ENCODE measurements at regions of chr3 and their contacts with region 1.

Region 1: GRCh38 chr3:29280404-29281093 is at the start of gene RBMS3:
- DNase-seq: peak; percentile 97
- H3K4me3 ChIP-seq: peak within 1 kb of the TSS; percentile 87
- H3K27ac ChIP-seq: peak within 1 kb of the TSS; percentile 88
- H3K4me1 ChIP-seq: peaks cover 16% of the 10 kb centered on the region
- H3K27me3 ChIP-seq: no peaks in the 10 kb centered on the region
- total RNA-seq, gene RBMS3: 40.0 and 45.7 TPM in 2 replicates

Region 2: DNA sequence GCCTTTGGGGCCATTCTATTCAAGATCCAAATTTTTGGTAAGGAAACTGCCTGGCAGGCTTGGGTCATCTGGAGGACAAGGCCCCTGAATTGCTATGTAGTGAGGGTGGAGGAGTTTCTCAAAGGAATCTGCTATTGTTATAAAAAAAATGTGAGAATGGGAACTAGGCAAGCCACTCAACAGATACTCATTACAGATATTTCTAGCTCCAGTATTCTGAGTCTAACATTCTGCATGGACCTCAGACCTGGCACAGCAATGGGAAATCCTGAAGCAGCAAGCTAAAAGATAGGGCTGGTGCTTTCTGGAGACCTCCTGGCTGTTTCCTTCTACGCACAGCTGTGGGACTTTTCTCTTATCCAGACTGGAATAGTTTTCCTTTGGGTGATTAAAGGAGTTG is 430.4 kb before region 1 on chr3:
- in situ Hi-C with region 1: no loop called
- DNase-seq: peak; percentile 58
- H3K4me3 ChIP-seq: no peak overlapping the region
- H3K27ac ChIP-seq: no peak overlapping the region
- H3K4me1 ChIP-seq: peaks cover 8% of the 10 kb centered on the region; the same call in 1 of the 2 replicates
- H3K27me3 ChIP-seq: 0 out of 2 replicates have a peak, but pooled peaks cover 8% of the 10 kb centered on the region

Region 3: DNA sequence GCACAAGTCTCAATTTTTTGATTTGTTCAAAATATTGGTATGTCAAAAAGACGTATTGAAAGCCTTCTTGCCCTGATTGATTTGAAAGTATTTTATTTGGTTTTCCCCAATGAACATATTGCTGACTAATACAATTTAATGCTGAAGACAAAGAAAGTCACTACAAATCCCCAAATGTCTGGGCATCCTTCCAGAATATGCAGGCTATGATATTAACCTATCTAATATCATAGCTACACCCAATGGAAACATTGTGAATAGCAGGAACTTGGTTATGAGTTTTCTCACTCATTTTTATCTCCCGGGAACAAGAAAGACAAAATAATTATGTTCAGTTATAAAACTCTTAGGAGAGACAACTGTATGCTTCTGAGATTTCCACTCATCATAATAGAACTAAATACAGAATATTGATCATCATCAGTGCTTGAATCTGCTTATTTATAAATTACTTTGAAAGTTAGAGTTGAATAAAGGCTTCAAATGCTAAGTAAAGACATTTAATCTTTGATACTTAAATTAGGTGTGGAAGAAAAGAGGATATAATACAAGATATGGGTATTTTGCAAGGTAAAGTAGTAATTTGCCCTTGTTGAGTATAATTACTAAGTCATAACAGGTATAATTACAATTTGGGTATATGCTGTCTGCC is 484.2 kb after region 1 on chr3:
- in situ Hi-C with region 1: loop called (anchors 25 kb)
- DNase-seq: peak; percentile 87
- H3K4me3 ChIP-seq: no peak overlapping the region; the same call in 1 of the 2 replicates
- H3K27ac ChIP-seq: peak overlapping the region; percentile 71
- H3K4me1 ChIP-seq: peaks cover 48% of the 10 kb centered on the region
- H3K27me3 ChIP-seq: no peaks in the 10 kb centered on the region

Measured in GM23248 (cell line).